BJ (cell line): ENCODE measurements at regions of chrX and their contacts with region 1.

Region 1: GRCh38 chrX:154515878-154516655 is at the start of gene FAM3A:
- DNase-seq: peak; percentile 35
- H3K4me3 ChIP-seq: peak within 1 kb of the TSS; percentile 68
- H3K27me3 ChIP-seq: no peaks in the 10 kb centered on the region
- CTCF ChIP-seq: no peak
- polyA plus RNA-seq, gene FAM3A: 17.3 and 34.8 TPM in 2 replicates

Region 2: GRCh38 chrX:154526901-154527675 is 11.0 kb after region 1 on chrX:
- CTCF ChIA-PET with region 1: interaction called, 18 read pairs
- POLR2A ChIA-PET with region 1: no interaction called
- DNase-seq: no peak
- H3K4me3 ChIP-seq: peak overlapping the region; percentile 24
- H3K27me3 ChIP-seq: no peaks in the 10 kb centered on the region
- CTCF ChIP-seq: peak; percentile 67